Activated naive CD4-positive, alpha-beta T cell treated with anti-CD3 and anti-CD28 coated beads for 36 hours (primary cell): ENCODE measurements at regions of chr6 and their contacts with region 1.

Region 1: GRCh38 chr6:159997498-159998101 is 28.7 kb downstream of the IGF2R start:
- DNase-seq: no peak
- H3K4me3 Mint-ChIP-seq: no peak overlapping the region
- H3K27ac Mint-ChIP-seq: peak overlapping the region; percentile 46
- H3K4me1 Mint-ChIP-seq: peaks cover 67% of the 10 kb centered on the region
- H3K27me3 Mint-ChIP-seq: no peaks in the 10 kb centered on the region

Region 2: DNA sequence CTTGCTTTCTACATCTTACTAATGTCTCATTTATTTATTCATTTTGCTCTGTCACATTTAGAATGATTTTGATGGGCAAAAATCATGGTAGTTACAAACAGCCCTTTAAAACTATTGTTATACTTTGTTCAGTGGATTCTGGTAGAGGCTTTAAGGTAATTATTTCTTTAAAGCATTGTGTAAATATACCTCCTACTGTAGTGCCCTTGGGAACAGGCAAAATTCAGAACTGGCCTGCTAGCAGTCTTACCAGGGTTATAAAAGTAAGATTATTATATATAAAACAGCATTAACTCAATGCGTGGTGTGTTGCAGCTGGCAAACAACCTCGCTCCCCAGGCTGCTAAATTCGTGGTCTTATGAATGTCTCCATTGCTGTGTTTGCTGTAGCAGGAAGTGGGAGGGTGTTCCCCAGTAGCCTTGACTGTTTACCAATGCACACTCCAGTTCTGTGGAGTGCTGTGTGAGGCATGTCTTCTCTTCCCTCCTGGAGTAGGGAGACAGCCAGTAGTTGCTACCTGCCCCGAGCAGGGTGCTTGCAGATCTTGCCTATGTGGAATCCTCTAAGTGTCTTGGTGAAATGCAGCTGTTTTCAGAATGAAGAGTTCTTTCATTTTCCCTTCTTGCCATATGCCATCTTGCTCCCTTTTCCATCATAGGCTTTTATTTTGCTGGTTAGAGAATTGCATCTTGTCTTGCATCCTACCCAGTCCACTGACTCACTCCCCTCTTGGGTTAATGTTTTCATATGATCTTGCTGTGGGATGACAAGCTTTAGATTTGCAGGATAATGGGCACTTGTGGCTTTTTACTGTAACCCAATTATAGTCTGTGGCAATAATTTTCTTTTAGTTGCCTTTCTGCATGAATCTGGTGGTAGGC is 16.6 kb after region 1 on chr6:
- CTCF ChIA-PET with region 1: no interaction called
- intact Hi-C with region 1: loop called (anchors 1 kb)
- DNase-seq: peak; percentile 48
- H3K4me3 Mint-ChIP-seq: peak overlapping the region; percentile 5
- H3K27ac Mint-ChIP-seq: peak overlapping the region; percentile 40
- H3K4me1 Mint-ChIP-seq: peaks cover 44% of the 10 kb centered on the region
- H3K27me3 Mint-ChIP-seq: no peaks in the 10 kb centered on the region